K562 (cell line): ENCODE measurements at regions of chr7 and their contacts with region 1.

Region 1: GRCh38 chr7:4631664-4632171 is 50.4 kb upstream of the FOXK1 start:
- DNase-seq: peak; percentile 46 to 84 (median 62)
- ATAC-seq: peak; percentile 89
- H3K4me3 ChIP-seq: no peak overlapping the region
- H3K27ac ChIP-seq: no peak overlapping the region
- H3K4me1 ChIP-seq: peaks cover 0 to 9% of the 10 kb centered on the region in 2 experiments; a peak in 3 of 5 replicates
- H3K27me3 ChIP-seq: no peaks in the 10 kb centered on the region; a peak in 1 of 5 replicates
- CTCF ChIP-seq: peak; percentile 82 to 92 (median 89)
- EP300 ChIP-seq: no peak
- POLR2A ChIP-seq: no peak
- RAD21 ChIP-seq: peak; percentile 90 to 94

Region 2: DNA sequence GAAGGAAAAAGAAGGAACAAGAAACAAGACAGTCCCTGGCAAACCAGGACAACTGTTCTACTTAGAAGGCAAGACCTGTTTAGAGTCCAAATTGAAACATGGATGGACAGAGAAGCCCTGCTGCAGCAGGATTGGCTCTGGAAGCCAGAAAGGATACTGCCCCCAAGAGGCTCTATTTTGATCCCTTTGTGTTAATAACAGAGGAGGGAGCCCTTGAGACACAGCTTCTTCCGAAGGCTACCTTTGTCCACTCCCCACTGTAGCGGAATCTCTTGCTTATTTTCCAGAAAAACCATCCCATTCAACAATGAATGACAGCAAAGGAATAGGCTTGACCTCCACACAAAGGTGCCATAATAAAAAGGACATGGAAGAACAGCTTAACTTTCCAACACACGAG is 69.9 kb before region 1 on chr7:
- CTCF ChIA-PET with region 1: no interaction called
- POLR2A ChIA-PET with region 1: no interaction called
- in situ Hi-C with region 1: no loop called
- intact Hi-C with region 1: loop called (anchors 2 kb)
- DNase-seq: peak in 2 of 4 experiments; percentile 22 to 26
- ATAC-seq: peak; percentile 85
- H3K4me3 ChIP-seq: no peak overlapping the region
- H3K27ac ChIP-seq: no peak overlapping the region
- H3K4me1 ChIP-seq: no peaks in the 10 kb centered on the region
- H3K27me3 ChIP-seq: peaks cover 3 to 9% of the 10 kb centered on the region in 2 experiments; a peak in 1 of 5 replicates
- CTCF ChIP-seq: peak; percentile 43 to 92 (median 74); a peak in 5 of 6 replicates
- EP300 ChIP-seq: no peak
- POLR2A ChIP-seq: no peak
- RAD21 ChIP-seq: peak in 1 of 2 experiments; percentile 46; a peak in 2 of 4 replicates

Region 3: DNA sequence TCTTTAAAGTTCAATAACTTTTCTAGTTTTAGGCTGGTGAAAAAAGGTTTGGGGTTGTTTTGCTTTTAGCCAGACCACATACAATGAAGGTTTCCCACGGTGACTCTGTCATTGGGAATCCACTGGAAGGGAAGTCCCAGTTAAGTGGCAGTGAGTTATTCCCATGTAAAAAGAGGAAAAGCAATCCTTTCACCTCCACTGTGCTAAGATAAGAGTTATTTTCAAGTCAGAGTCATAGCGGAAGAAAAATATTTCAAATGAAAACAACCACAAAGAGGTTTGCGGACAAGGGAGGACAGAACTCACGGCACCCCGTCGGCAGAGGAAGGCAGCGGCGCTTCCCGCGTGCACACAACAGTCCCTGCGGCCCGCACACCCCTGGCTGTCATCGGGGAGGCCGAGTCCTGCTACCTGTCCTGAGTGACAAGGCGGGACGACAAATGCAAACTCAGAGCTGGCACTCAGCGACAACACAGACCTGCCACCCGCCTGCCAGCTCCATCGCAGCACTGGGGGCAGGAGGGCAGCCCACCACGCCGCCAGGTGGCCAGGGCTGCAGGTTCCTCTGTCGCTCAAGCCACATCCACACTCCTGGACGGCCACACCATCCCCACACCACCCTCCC is 239.4 kb after region 1 on chr7:
- CTCF ChIA-PET with region 1: no interaction called
- POLR2A ChIA-PET with region 1: no interaction called
- in situ Hi-C with region 1: no loop called
- intact Hi-C with region 1: no loop called
- DNase-seq: no peak
- ATAC-seq: no peak
- H3K4me3 ChIP-seq: no peak overlapping the region
- H3K27ac ChIP-seq: no peak overlapping the region
- H3K4me1 ChIP-seq: peaks cover 7 to 26% of the 10 kb centered on the region in 2 experiments
- H3K27me3 ChIP-seq: no peaks in the 10 kb centered on the region
- CTCF ChIP-seq: no peak
- EP300 ChIP-seq: no peak
- POLR2A ChIP-seq: no peak
- RAD21 ChIP-seq: no peak